ENCODE measurements at regions of chr15 and their contacts with region 1.

Region 1: DNA sequence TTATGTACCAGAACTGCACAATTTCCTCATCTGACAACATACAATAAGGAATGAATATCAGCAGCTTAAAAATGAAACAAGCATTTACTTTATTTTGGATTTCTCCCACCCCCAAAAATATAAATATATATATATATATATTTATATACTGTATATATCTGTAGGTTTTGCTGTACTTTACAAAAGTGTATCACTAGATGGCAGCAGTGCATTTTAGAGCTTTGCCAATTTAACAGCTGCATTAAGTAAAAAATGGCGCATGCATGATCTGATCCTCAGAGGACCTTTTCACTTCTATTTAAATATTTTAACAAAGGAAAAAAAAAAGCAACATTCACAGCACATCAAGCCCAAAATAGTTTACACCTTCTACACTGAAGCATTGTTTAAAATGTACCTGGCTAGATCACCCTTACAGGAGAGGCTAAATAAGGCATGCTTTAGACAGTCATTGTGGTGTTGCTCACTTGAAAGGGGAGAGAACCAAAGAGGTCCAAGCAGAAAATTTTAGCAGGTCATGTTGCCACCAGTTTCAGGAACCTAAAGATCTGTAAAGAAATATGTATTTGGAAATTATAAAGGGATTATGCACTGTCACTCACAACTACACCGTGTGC is 72.6 kb downstream of the NPTN start:
- DNase-seq: peak; percentile 21
- H3K4me3 Mint-ChIP-seq: no peak overlapping the region
- H3K27ac Mint-ChIP-seq: no peak overlapping the region
- H3K4me1 Mint-ChIP-seq: no peaks in the 10 kb centered on the region
- H3K27me3 Mint-ChIP-seq: no peaks in the 10 kb centered on the region

Region 2: DNA sequence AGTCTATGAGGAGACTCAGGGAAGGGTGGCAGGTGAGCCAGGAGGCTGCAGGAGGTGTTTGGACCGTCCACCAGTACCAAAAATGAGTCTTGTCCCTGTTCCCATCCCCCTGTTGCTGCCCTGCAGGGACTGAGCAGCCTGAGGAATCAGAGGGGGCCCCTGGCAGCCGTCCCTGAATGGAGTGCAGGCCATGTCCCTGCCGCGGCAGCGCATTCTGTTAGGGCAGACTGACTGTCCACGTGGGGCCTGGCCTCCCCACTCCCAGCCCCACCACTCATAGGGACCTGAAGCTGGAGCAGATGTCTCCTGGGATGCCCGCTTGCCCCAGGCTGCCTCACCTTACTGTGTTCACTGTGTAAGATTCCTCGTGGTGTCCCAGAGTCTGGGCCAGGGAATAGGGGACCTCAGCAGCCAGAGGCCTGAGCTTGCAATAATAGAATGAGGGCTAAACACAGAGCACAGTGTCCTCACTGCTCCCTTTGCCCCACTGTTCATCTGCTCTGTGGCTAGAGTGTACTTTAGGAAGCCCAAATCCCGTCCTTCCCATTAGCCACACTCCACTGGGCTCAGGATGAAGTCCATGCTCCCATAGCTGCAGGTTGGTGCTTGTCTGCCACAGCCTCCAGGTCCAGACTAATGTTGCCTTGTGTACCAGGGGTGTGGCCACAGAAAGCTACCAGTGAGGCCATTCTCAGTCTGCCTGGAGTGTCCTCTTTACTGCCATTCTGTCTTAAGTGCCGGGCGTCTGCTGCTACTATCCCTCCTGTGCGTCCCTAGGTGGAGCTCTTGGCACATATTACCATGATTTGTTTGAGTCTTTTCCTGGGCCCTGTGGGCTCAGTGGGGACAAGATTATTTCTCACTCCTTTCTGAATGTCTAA is 255.0 kb before region 1 on chr15:
- CTCF ChIA-PET with region 1: no interaction called
- intact Hi-C with region 1: loop called (anchors 10 kb)
- DNase-seq: peak; percentile 36
- H3K4me3 Mint-ChIP-seq: no peak overlapping the region
- H3K27ac Mint-ChIP-seq: no peak overlapping the region
- H3K4me1 Mint-ChIP-seq: peaks cover 4% of the 10 kb centered on the region
- H3K27me3 Mint-ChIP-seq: no peaks in the 10 kb centered on the region

Region 3: DNA sequence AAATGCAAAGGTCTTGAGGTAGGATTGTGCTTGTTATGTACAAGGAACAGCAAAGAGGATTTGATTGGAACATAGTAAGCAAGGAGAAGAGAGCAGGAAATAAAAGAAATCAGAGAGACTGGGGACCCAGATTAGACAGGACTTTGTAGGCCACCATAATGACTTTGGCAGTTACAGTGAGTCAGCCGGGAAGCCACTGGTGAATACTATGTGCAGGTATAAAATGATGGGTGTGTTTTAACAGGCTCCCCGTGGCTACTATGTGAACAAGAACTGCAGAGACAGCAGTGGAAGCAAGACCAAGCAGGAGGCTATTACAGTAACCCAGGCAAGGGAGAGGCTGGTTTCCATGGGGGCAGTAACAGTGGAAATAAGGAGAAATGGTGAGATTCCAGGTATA is 17.4 kb after region 1 on chr15:
- CTCF ChIA-PET with region 1: no interaction called
- intact Hi-C with region 1: no loop called
- DNase-seq: no peak
- H3K4me3 Mint-ChIP-seq: no peak overlapping the region
- H3K27ac Mint-ChIP-seq: no peak overlapping the region
- H3K4me1 Mint-ChIP-seq: no peaks in the 10 kb centered on the region
- H3K27me3 Mint-ChIP-seq: no peaks in the 10 kb centered on the region

Measured in activated naive CD4-positive, alpha-beta T cell treated with anti-CD3 and anti-CD28 coated beads for 36 hours (primary cell).